Sigmoid colon (tissue), 7 donors: ENCODE measurements at regions of chr4 and their contacts with region 1.

Region 1: GRCh38 chr4:150593996-150594395 is 12.0 kb downstream of the MAB21L2 start:
- DNase-seq: no peak
- H3K4me3 ChIP-seq: peak overlapping the region in 1 of 4 donors; percentile 30
- H3K27ac ChIP-seq: peak overlapping the region in 3 of 4 donors; percentile 90 to 93 (median 92)
- H3K4me1 ChIP-seq: peaks cover 0 to 34% (median 32%) of the 10 kb centered on the region in 4 donors
- H3K27me3 ChIP-seq: no peaks in the 10 kb centered on the region
- CTCF ChIP-seq: no peak
- EP300 ChIP-seq: no peak
- POLR2A ChIP-seq: no peak

Region 2: DNA sequence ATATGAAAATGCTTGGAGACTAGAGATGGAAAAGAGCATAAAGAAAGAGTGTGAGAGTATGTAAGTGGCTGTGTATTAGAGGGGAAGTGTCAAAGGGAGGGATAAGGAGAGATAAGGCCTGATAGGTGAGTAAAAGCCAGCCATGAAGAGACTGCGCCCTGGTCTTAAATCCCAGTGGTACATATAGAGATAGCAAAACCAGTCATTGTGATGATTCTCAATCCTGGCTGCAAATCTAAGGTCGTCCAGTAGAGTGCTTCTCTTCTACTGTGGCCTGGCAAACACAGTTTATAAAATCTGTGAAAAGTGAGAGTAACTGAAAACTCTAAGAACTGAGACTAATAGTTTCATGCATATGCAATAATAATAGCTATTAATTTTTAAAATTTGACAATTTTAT is 74.8 kb after region 1 on chr4:
- intact Hi-C with region 1: no loop called
- DNase-seq: no peak
- H3K4me3 ChIP-seq: no peak overlapping the region
- H3K27ac ChIP-seq: no peak overlapping the region
- H3K4me1 ChIP-seq: no peaks in the 10 kb centered on the region
- H3K27me3 ChIP-seq: no peaks in the 10 kb centered on the region
- CTCF ChIP-seq: no peak
- EP300 ChIP-seq: no peak
- POLR2A ChIP-seq: no peak

Region 3: GRCh38 chr4:150723727-150724411 is 129.9 kb after region 1 on chr4:
- intact Hi-C with region 1: no loop called
- DNase-seq: no peak
- H3K4me3 ChIP-seq: no peak overlapping the region
- H3K27ac ChIP-seq: peak overlapping the region in 1 of 4 donors; percentile 54
- H3K4me1 ChIP-seq: peaks cover 0 to 14% (median 8%) of the 10 kb centered on the region in 4 donors
- H3K27me3 ChIP-seq: no peaks in the 10 kb centered on the region
- CTCF ChIP-seq: no peak
- EP300 ChIP-seq: no peak
- POLR2A ChIP-seq: no peak

Region 4: DNA sequence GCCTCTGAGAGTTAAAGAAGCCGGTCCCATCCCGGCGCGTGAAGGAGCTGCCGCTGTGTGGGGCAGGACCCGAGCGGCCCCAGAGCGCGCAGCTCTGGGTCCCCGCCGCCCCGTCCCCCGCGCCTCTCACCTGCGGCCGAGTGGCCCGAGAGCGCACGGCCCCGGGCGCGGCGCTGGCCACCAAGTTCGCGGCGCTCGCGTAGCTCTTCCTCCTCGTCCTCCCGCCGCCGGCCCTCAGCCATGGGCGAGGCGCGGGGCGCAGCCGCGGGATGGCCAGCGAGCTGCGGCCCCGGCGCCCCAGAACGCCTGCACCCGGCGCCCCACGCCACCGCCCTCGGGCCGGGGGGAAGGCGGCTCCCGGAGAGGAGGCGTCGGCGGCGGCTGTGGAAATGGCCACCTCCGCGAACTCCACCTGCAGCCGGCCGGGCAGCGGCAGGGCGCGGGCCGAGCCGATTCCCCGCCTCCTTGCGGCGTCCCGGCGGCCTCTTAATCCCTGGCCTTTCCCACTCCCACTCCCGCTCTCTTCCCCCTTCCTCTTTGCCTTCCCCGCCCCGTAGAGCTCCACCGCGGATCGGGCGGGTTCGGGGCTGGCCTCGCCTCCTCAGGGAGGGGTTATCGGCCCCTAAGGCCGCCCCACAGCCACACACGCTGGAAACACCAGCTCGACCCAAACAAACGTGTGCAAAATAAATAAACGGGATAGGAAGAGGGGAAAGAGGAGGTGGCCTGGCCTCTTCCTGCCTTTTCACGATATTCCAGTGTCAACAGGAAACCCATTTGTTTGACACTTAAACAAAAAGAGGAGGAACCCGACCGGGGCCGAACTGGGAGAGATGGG is 731.3 kb after region 1 on chr4 and contains the start of gene SH3D19:
- intact Hi-C with region 1: loop called (anchors 10 kb)
- DNase-seq: peak; percentile 89
- H3K4me3 ChIP-seq: peak within 1 kb of the TSS; percentile 52 to 80 (median 68)
- H3K27ac ChIP-seq: peak within 1 kb of the TSS; percentile 89 to 95 (median 92)
- H3K4me1 ChIP-seq: peaks cover 0 to 42% (median 33%) of the 10 kb centered on the region in 4 donors
- H3K27me3 ChIP-seq: no peaks in the 10 kb centered on the region
- CTCF ChIP-seq: no peak
- EP300 ChIP-seq: no peak
- POLR2A ChIP-seq: peak; percentile 35 to 68
- total RNA-seq, gene SH3D19: 105 to 195 (median 128) TPM